A673 (cell line): ENCODE measurements at regions of chr12 and their contacts with region 1.

Region 1: GRCh38 chr12:82069931-82070514 is 288.2 kb downstream of the CCDC59 start:
- DNase-seq: no peak
- H3K4me3 ChIP-seq: no peak overlapping the region
- H3K27ac ChIP-seq: no peak overlapping the region
- H3K4me1 ChIP-seq: no peaks in the 10 kb centered on the region
- H3K27me3 ChIP-seq: no peaks in the 10 kb centered on the region
- CTCF ChIP-seq: no peak

Region 2: GRCh38 chr12:82029936-82030335 is 40.1 kb before region 1 on chr12:
- CTCF ChIA-PET with region 1: no interaction called
- POLR2A ChIA-PET with region 1: no interaction called
- intact Hi-C with region 1: loop called (anchors 5 kb)
- DNase-seq: no peak
- H3K4me3 ChIP-seq: no peak overlapping the region
- H3K27ac ChIP-seq: no peak overlapping the region
- H3K4me1 ChIP-seq: no peaks in the 10 kb centered on the region
- H3K27me3 ChIP-seq: no peaks in the 10 kb centered on the region
- CTCF ChIP-seq: no peak

Region 3: DNA sequence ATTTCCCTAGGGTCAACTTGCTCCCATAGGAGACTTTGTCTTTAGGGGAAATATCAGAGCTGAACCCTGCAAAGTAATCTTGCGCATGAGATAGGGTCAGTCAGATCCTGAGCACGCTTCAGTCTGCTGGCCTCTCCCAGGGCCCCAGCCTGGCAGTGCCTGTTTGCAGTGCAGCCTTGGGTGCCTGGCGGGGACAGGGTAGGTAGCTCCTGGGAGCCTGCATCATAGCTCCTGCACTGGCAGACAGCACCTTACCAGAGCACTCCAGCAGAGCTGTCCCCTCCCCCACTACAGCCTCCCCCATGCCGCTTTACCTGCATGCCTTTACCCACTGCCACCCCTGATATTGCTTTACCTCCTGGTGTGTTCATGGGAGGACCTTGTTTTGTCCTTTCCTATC is 50.9 kb after region 1 on chr12:
- CTCF ChIA-PET with region 1: no interaction called
- POLR2A ChIA-PET with region 1: no interaction called
- intact Hi-C with region 1: no loop called
- DNase-seq: no peak
- H3K4me3 ChIP-seq: no peak overlapping the region
- H3K27ac ChIP-seq: no peak overlapping the region
- H3K4me1 ChIP-seq: no peaks in the 10 kb centered on the region
- H3K27me3 ChIP-seq: no peaks in the 10 kb centered on the region
- CTCF ChIP-seq: no peak

Region 4: DNA sequence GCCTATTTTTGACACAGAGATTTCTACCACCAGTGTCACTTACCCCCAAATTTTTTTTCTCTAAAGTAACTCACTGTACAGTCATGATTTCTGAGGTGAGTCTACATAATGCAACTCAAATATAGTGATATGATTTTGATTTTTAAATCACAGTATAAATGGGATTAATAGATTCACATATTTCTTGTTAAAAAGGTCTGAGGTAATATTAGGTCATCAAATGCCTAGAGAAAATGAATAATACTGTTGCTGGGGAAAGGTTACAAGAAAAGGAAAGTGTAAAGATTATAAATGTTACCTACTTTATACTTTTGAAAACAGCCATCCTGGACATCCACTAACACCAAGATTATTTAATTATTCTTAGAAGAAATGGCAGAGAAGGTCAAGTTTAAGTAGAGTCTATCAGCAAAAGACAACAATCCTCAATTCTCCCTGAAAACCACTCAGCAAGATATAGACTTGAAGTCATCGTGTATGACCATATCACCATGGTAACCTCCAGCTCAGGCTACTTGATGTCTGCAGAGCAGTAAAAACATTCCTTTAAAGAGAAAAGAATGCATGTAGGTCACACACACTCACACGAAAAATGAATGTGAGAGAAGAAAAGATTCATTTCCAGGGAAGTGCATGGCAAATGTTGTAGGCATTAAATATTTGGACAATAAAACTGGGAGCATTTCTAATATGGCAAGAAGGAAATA is 229.4 kb after region 1 on chr12:
- CTCF ChIA-PET with region 1: no interaction called
- POLR2A ChIA-PET with region 1: no interaction called
- intact Hi-C with region 1: no loop called
- DNase-seq: no peak
- H3K4me3 ChIP-seq: no peak overlapping the region
- H3K27ac ChIP-seq: no peak overlapping the region
- H3K4me1 ChIP-seq: no peaks in the 10 kb centered on the region
- H3K27me3 ChIP-seq: no peaks in the 10 kb centered on the region
- CTCF ChIP-seq: no peak